Left lung (tissue), 14 donors: ENCODE measurements at regions of chr1 and their contacts with region 1.

Region 1: DNA sequence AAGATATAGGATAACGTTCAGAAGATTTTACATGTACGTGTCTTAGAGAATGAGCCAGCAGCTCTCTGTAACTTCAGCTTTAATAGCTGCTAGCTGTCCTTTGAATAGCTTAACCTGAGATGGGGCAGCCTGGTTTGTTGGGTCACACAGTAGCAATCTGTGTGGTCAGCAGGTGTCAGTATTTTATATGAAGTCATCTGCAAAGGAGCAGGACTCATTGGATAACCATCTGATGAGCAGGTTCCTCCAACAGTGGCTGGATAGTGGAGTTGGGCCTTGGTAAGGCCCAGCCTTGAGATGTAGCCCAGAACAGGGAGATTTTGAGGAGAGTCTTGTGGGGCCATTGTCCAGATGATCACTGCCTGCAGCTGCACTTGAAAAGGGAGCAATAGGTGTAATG is 6.4 kb downstream of the GSTM5 start:
- DNase-seq: no peak
- ATAC-seq: no peak
- H3K4me3 ChIP-seq: no peak overlapping the region
- H3K27ac ChIP-seq: no peak overlapping the region
- H3K4me1 ChIP-seq: no peaks in the 10 kb centered on the region
- H3K27me3 ChIP-seq: no peaks in the 10 kb centered on the region
- CTCF ChIP-seq: no peak

Region 2: GRCh38 chr1:109671067-109671466 is 47.4 kb before region 1 on chr1:
- intact Hi-C with region 1: loop called in 1 of 2 experiments (anchors 5 kb)
- DNase-seq: no peak
- ATAC-seq: no peak
- H3K4me3 ChIP-seq: no peak overlapping the region
- H3K27ac ChIP-seq: no peak overlapping the region
- H3K4me1 ChIP-seq: peaks cover 0 to 15% of the 10 kb centered on the region in 2 donors
- H3K27me3 ChIP-seq: no peaks in the 10 kb centered on the region
- CTCF ChIP-seq: no peak

Region 3: GRCh38 chr1:109790735-109791494 is 72.4 kb after region 1 on chr1:
- intact Hi-C with region 1: no loop called
- DNase-seq: peak in 3 of 4 donors; percentile 54 to 88 (median 77)
- ATAC-seq: peak; percentile 46
- H3K4me3 ChIP-seq: no peak overlapping the region
- H3K27ac ChIP-seq: peak overlapping the region; percentile 30 to 81
- H3K4me1 ChIP-seq: peaks cover 28 to 79% of the 10 kb centered on the region in 2 donors
- H3K27me3 ChIP-seq: no peaks in the 10 kb centered on the region
- CTCF ChIP-seq: peak; percentile 23 to 45